ENCODE measurements at regions of chrX and their contacts with region 1.

Region 1: GRCh38 chrX:154534862-154535670 is 11.6 kb downstream of the G6PD start:
- DNase-seq: peak; percentile 89 to 95
- ATAC-seq: peak; percentile 96 to 98 (median 96)
- H3K4me3 ChIP-seq: no peak overlapping the region
- H3K27ac ChIP-seq: no peak overlapping the region
- H3K4me1 ChIP-seq: no peaks in the 10 kb centered on the region
- H3K27me3 ChIP-seq: no peaks in the 10 kb centered on the region
- CTCF ChIP-seq: peak; percentile 99

Region 2: GRCh38 chrX:152958524-152959465 is 1576.3 kb before region 1 on chrX:
- intact Hi-C with region 1: loop called in 1 of 2 experiments (anchors 2 kb)
- DNase-seq: peak; percentile 86 to 94
- ATAC-seq: peak; percentile 95 to 99 (median 98)
- H3K4me3 ChIP-seq: peak overlapping the region; percentile 61
- H3K27ac ChIP-seq: peak overlapping the region; percentile 71
- H3K4me1 ChIP-seq: no peaks in the 10 kb centered on the region
- H3K27me3 ChIP-seq: peaks cover 0 to under 1% (median 0%) of the 10 kb centered on the region in 3 donors
- CTCF ChIP-seq: peak; percentile 92

Region 3: DNA sequence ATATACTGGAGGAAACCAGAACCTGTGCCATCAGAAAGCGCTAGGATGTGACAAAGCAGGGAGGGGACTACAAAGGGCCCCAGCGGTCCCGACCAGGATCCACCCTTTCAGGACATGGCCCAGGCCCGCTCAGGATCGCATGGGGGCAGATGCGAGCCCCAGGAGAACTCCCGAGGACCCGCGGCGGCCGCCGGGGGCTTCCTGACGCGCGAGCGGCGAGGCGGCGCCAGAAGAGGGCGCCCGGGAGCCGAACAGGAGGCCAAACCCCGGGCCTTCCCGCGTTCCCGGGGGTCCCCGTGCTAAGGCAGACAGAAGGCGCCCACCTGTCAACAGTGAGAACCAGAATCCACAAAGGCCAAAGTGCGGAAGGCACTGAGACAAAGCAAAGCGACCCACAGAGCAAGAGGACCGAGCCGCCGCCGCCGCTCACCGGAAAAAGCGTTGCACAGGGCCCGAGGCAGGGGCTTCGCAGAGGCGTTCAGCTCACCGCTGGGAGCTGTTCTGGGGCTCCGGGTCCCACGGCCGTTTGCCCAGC is 398.4 kb before region 1 on chrX:
- intact Hi-C with region 1: loop called in 1 of 2 experiments (anchors 5 kb)
- DNase-seq: peak; percentile 72 to 82
- ATAC-seq: peak; percentile 61 to 96 (median 78)
- H3K4me3 ChIP-seq: peak overlapping the region; percentile 50
- H3K27ac ChIP-seq: no peak overlapping the region
- H3K4me1 ChIP-seq: no peaks in the 10 kb centered on the region
- H3K27me3 ChIP-seq: peaks cover 0 to 10% (median 0%) of the 10 kb centered on the region in 3 donors
- CTCF ChIP-seq: peak; percentile 72

Region 4: DNA sequence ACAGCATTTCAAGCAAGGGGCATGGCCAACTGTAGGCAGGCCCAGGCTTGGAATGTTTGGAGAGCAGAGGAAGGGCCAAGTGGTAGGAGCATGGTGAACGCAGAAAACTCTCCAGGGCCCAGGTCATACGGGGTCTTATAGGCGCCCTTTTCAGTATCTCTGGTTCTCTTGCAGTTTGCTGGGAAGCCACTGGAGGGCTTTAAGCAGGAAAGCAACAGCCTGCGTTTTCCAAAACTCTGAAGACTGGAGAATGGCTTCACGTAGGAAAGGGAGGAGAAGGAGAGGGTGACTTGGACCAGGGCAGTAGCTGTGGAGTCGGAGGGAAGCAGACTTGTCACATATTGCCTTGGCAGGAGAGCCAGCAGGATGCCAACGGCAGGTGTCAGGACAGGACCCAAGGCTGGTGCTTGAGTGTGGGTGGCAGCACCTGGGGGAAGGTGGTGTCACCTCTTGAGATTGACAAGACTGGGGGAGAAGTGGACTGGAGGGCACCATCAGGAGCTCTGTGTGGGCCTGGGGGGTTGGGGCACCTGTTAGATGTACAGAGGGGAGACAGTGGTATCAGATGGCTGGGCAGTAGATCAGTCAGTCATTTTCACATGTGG is 217.6 kb before region 1 on chrX:
- intact Hi-C with region 1: loop called in 1 of 2 experiments (anchors 5 kb)
- DNase-seq: no peak
- ATAC-seq: peak in 3 of 4 donors; percentile 25 to 50 (median 28)
- H3K4me3 ChIP-seq: no peak overlapping the region
- H3K27ac ChIP-seq: no peak overlapping the region
- H3K4me1 ChIP-seq: no peaks in the 10 kb centered on the region
- H3K27me3 ChIP-seq: peaks cover 0 to 22% (median 0%) of the 10 kb centered on the region in 3 donors
- CTCF ChIP-seq: peak; percentile 40

Region 5: GRCh38 chrX:154373340-154374306 is 161.4 kb before region 1 on chrX:
- intact Hi-C with region 1: loop called in 1 of 2 experiments (anchors 2 kb)
- DNase-seq: peak in 1 of 2 donors; percentile 69
- ATAC-seq: peak in 2 of 4 donors; percentile 24 to 36
- H3K4me3 ChIP-seq: peak overlapping the region; percentile 62
- H3K27ac ChIP-seq: peak overlapping the region; percentile 72
- H3K4me1 ChIP-seq: peaks cover 5% of the 10 kb centered on the region
- H3K27me3 ChIP-seq: no peaks in the 10 kb centered on the region
- CTCF ChIP-seq: peak; percentile 52

Region 6: GRCh38 chrX:154419732-154420364 is 115.2 kb before region 1 on chrX:
- intact Hi-C with region 1: loop called in 1 of 2 experiments (anchors 5 kb)
- DNase-seq: no peak
- ATAC-seq: peak; percentile 74 to 85 (median 82)
- H3K4me3 ChIP-seq: no peak overlapping the region
- H3K27ac ChIP-seq: peak overlapping the region; percentile 16
- H3K4me1 ChIP-seq: peaks cover 3% of the 10 kb centered on the region
- H3K27me3 ChIP-seq: peaks cover 0 to 9% (median 0%) of the 10 kb centered on the region in 3 donors
- CTCF ChIP-seq: no peak

Region 7: GRCh38 chrX:154443992-154444754 is 90.9 kb before region 1 on chrX and contains the start of gene FAM50A:
- intact Hi-C with region 1: no loop called
- DNase-seq: peak; percentile 87 to 89
- ATAC-seq: peak; percentile 87 to 96 (median 92)
- H3K4me3 ChIP-seq: peak within 1 kb of the TSS; percentile 69
- H3K27ac ChIP-seq: peak within 1 kb of the TSS; percentile 86
- H3K4me1 ChIP-seq: peaks cover 10% of the 10 kb centered on the region
- H3K27me3 ChIP-seq: no peaks in the 10 kb centered on the region
- CTCF ChIP-seq: peak; percentile 4
- total RNA-seq, gene FAM50A: 48.6 to 75.7 (median 55.6) TPM

Measured in psoas muscle (tissue), 8 donors.